Right ventricle myocardium inferior (tissue), 1 donor: ENCODE measurements at regions of chr14 and their contacts with region 1.

Region 1: GRCh38 chr14:22570132-22570949 is 18.7 kb downstream of the DAD1 start:
- DNase-seq: no peak
- ATAC-seq: peak; percentile 72

Region 2: DNA sequence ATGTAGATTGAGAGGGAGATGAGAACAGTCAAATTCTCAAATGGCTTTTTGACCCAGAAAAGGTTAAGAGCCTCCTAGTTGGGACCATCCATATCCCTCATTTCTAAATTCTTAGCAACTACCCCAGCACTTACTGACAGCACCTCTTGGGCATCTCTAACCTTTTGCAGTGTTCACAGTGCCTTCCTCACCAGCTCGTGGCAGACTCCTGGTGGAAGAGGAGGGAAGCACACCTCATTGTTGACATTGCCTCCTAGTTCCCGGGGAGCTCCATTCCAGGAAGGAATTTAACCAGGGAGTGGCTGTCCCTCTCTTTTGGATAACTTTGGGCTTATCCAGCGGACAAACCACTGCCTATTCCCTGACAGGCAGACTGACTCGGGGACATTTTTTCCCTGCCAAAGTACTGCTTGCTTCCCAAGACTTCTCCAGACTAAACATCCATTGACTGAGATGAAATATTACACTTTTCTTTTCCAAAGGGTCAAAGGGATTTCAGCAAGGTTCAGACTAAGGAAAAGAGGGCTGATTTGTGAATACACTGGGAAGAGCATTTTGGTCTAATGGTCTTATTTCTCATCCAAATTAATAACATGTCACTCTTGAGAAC is 82.8 kb after region 1 on chr14:
- intact Hi-C with region 1: loop called (anchors 2 kb)
- DNase-seq: no peak
- ATAC-seq: peak; percentile 53

Region 3: DNA sequence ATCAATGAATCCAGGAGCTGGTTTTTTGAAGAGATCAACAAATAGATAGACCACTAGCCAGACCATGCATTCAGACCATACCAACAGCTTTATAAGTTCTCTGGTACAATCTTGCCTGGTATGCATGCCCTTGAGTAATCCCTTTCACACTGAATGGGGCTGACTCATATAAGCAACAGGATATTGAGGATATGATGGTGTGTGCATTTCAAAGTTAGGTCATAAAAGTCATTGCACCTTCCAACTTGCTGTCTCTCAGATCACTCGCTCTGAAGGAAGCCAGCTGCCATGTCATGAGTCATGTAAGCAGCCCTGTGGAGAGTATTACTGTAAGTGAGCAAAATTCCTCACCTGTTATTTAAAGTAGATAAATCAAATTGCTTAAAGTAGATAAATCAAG is 118.8 kb after region 1 on chr14:
- intact Hi-C with region 1: no loop called
- DNase-seq: no peak
- ATAC-seq: no peak

Region 4: DNA sequence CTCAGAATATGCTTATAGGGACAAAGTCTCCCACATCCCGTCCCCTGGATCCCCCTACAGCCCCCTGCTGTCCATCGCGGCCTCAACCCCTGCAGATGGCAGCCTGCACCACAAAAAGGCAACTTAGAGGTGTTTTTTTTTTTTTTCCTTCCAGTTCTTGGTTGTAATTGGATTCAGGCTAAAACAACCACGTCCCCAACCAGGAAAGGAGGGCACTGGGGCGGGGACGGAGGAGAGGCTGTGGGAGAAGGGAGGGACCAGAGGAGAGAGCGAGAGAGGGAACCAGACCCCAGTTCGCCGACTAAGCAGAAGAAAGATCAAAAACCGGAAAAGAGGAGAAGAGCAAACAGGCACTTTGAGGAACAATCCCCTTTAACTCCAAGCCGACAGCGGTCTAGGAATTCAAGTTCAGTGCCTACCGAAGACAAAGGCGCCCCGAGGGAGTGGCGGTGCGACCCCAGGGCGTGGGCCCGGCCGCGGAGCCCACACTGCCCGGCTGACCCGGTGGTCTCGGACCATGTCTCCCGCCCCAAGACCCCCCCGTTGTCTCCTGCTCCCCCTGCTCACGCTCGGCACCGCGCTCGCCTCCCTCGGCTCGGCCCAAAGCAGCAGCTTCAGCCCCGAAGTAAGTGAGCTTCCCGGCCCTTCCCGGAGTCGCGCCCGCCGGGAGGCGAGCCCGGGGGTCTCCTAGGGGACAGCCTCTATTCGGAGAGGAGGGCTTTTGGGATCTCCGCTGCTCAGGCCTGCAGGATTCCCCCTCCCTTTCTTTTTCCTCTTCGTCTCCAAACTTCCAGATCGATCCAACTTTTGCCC is 266.2 kb after region 1 on chr14 and contains the start of gene MMP14:
- intact Hi-C with region 1: loop called (anchors 5 kb)
- DNase-seq: peak; percentile 85
- ATAC-seq: peak; percentile 79
- total RNA-seq, gene MMP14: 26.0 TPM